IMR-90 (cell line): ENCODE measurements at regions of chr1 and their contacts with region 1.

Region 1: DNA sequence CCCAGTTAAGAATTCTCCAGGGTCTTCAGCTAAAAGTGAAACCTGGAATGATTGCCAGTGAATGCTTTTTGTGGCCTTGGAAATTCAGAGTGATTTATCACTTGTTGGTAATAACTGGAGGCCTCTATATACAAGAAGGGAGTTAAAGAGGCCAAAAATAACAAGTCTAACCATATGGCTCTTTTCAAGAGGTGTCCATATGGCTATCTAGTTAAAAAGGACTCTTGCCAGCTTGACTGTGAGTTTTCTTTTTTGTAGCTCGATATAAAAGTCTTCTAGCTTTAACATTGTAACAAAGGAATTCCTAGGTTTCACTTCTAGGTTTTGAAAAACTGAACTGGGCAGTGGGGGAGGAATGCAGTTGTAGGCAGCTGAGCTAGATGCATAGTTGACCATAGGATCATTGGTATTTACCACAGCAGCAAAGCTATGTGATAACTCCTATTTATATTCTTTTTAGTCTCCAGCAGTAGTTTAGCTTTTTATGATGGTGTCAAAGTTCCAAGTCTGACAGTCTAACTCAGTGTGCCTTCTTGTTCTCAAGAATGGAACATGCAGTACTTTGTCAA is 44.4 kb downstream of the CACHD1 start:
- DNase-seq: peak; percentile 88
- ATAC-seq: peak; percentile 80
- H3K4me3 ChIP-seq: peak overlapping the region; percentile 7; the same call in 1 of the 2 replicates
- H3K27ac ChIP-seq: no peak overlapping the region
- H3K4me1 ChIP-seq: peaks cover 11% of the 10 kb centered on the region
- H3K27me3 ChIP-seq: peaks cover 2% of the 10 kb centered on the region; the same call in 1 of the 2 replicates
- CTCF ChIP-seq: no peak
- POLR2A ChIP-seq: no peak
- RAD21 ChIP-seq: no peak

Region 2: DNA sequence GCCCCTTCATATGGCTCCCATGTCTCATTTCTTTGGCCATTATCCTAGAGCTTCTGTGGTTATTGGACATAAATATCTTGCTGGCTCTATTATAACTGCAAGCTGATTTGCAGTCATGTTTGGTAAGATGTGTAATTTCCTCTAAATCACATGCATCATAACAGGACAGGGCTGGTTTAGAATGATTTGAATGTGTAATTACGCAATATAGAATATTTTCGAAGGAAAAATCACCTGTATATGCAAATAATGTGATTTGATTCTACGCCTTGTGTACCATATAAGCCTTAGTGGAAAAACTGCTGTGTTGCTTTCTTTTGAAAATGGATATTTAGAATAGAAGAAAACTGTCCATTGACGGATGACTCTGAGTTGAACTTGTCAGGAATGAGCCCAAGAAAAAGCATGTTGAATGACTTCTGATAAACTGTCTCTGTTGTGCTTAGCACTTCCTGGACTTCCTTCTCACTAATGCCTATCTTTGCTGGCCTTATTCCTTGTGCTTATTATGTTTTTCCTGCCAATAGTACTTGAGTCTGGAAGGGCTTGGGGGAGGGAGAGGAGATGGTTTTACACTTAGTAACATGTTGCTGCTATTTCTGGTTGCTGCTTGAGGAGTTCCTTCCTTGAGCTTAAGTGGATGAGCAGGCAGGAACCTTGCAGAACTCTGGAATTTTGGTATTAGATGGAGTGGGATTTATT is 37.9 kb before region 1 on chr1:
- CTCF ChIA-PET with region 1: no interaction called
- POLR2A ChIA-PET with region 1: no interaction called
- dilution Hi-C with region 1: no loop called
- in situ Hi-C with region 1: no loop called
- intact Hi-C with region 1: loop called (anchors 5 kb)
- DNase-seq: peak; percentile 87
- ATAC-seq: peak; percentile 92
- H3K4me3 ChIP-seq: no peak overlapping the region
- H3K27ac ChIP-seq: no peak overlapping the region
- H3K4me1 ChIP-seq: peaks cover 3% of the 10 kb centered on the region; the same call in 1 of the 2 replicates
- H3K27me3 ChIP-seq: no peaks in the 10 kb centered on the region
- CTCF ChIP-seq: no peak
- POLR2A ChIP-seq: no peak
- RAD21 ChIP-seq: no peak